ENCODE measurements at regions of chr18 and their contacts with region 1.

Region 1: DNA sequence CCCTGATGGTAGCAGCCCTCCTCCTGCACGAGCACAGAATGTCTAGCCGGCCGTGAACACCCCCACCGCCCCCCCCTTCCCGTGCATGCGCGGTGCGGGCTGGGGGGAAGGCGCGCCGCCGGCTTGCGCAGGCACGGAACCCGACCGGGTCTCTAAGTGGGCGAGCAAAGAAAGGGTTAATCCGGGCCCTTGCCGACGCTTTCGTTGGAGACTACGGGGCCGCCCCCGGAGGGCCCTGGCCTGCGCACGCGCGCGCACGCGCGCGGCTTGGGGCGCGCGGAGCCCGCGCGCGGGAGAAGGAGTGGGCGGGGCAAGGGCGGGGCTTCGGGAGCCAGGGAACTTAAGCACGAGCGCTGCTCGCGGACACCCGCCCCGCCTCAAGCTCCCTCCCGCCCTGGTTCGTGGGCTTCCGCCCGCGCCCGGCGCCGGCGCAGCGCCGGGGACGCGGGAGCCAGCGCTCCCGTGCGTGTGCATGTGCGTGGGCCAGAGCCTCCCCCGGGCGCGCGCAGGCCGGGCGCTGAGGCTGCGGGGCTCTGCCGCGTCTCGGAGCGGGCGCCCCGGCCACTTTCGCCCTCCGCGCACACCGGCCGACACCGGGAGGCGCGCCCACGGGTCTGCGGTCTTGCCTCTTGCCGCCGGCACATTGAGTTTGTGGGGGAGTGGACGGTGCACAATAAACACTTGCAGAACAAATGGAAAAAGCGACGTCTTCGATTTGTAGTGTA is 617 bp upstream of the ZBTB14 start:
- DNase-seq: peak; percentile 90 to 96 (median 95)
- ATAC-seq: peak; percentile 80
- H3K4me3 ChIP-seq: peak overlapping the region; percentile 76
- H3K4me3 Mint-ChIP-seq: peak overlapping the region; percentile 87 to 98 (median 94)
- H3K27ac ChIP-seq: peak overlapping the region; percentile 87
- H3K27ac Mint-ChIP-seq: peak overlapping the region; percentile 86 to 99 (median 97)
- H3K4me1 ChIP-seq: peaks cover 24 to 37% of the 10 kb centered on the region in 2 donors
- H3K4me1 Mint-ChIP-seq: peaks cover 4 to 48% (median 42%) of the 10 kb centered on the region in 7 donors
- H3K27me3 ChIP-seq: no peaks in the 10 kb centered on the region
- H3K27me3 Mint-ChIP-seq: peaks cover 0 to 18% (median 1%) of the 10 kb centered on the region in 5 donors

Region 2: GRCh38 chr18:3593904-3594661 is 1702.1 kb before region 1 on chr18:
- CTCF ChIA-PET with region 1: no interaction called
- POLR2A ChIA-PET with region 1: interaction called, 3 read pairs
- intact Hi-C with region 1: loop called in 1 of 2 experiments (anchors 2 kb)
- DNase-seq: peak; percentile 71 to 96 (median 93)
- ATAC-seq: peak; percentile 82
- H3K4me3 ChIP-seq: peak overlapping the region; percentile 73
- H3K4me3 Mint-ChIP-seq: peak overlapping the region; percentile 84 to 97 (median 93)
- H3K27ac ChIP-seq: peak overlapping the region; percentile 89
- H3K27ac Mint-ChIP-seq: peak overlapping the region; percentile 98 to 100 (median 99)
- H3K4me1 ChIP-seq: peaks cover 31 to 40% of the 10 kb centered on the region in 2 donors
- H3K4me1 Mint-ChIP-seq: peaks cover 32 to 66% (median 57%) of the 10 kb centered on the region in 7 donors
- H3K27me3 ChIP-seq: no peaks in the 10 kb centered on the region
- H3K27me3 Mint-ChIP-seq: no peaks in the 10 kb centered on the region

Region 3: DNA sequence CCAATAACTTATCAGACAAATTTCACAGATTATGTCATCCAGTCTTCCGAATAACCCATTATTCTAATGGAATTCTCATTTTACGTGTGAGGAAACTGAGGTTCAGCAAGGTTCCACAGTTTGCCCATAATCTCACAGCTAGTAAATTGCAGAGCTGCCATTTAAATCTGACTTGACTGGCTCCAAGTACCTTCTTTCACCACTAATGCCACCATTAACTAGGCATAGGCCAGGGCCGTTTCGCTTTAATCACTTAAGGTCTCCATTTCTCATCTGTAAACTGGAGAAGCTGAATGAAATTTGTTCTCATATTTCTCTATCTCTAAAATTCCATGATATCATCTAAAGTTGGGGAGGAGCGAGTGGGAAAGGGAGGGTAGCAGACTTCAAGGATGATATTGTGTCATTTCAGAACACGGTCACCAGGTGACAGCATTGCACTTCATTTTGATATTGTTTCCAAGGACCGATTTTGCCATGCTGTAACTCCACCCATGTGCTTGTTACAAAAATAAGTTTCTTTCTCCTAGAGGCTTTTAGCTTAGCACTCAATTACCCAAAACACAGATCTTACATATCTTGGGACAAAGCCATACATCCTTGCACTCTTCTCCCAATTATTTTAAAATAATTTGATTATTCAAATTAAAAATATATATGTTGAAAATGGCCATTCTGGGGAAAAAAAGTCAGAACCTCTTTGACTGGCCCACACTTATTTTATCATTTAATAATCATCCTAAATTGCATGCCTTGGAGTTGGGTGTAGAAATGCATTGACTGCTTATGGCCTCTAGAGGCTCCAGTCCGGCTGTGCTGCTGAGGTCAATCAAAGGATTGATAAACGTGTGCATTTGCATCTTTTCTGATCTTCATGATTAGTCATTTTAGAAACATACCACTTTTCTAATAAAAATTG is 222.9 kb before region 1 on chr18:
- CTCF ChIA-PET with region 1: no interaction called
- POLR2A ChIA-PET with region 1: interaction called, 5 read pairs
- intact Hi-C with region 1: loop called in 1 of 2 experiments (anchors 1 kb)
- DNase-seq: peak in 7 of 9 donors; percentile 15 to 55 (median 39)
- ATAC-seq: peak; percentile 75
- H3K4me3 ChIP-seq: no peak overlapping the region
- H3K4me3 Mint-ChIP-seq: no peak overlapping the region
- H3K27ac ChIP-seq: no peak overlapping the region
- H3K27ac Mint-ChIP-seq: no peak overlapping the region
- H3K4me1 ChIP-seq: no peaks in the 10 kb centered on the region
- H3K4me1 Mint-ChIP-seq: peaks cover 0 to 7% (median 3%) of the 10 kb centered on the region in 7 donors
- H3K27me3 ChIP-seq: no peaks in the 10 kb centered on the region
- H3K27me3 Mint-ChIP-seq: peaks cover 0 to 4% (median under 1%) of the 10 kb centered on the region in 5 donors

Region 4: DNA sequence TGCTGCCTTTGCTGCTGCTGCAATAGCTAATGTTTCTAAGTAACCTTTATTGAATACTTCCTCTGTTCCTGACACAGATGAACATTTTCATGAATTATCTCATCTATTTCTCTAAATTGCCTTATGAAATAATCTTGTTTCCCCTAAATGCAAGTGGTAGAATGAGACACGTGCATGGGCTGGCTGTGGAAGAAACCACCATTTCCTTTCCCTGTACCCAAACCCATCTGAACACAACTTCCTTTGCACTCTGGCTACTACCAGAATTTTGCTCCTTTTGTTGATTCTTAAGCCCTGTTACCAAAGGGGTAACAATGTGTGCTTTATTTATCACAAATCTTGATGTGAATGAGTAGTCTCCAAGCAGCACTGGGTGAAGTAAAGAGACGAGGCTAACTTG is 128.3 kb before region 1 on chr18:
- CTCF ChIA-PET with region 1: no interaction called
- POLR2A ChIA-PET with region 1: interaction called, 104 read pairs
- intact Hi-C with region 1: no loop called
- DNase-seq: peak in 6 of 9 donors; percentile 32 to 58 (median 43)
- ATAC-seq: peak; percentile 58
- H3K4me3 ChIP-seq: peak overlapping the region; percentile 6
- H3K4me3 Mint-ChIP-seq: peak overlapping the region; percentile 52 to 89 (median 69)
- H3K27ac ChIP-seq: peak overlapping the region; percentile 43
- H3K27ac Mint-ChIP-seq: peak overlapping the region in 8 of 9 donors; percentile 76 to 94 (median 87)
- H3K4me1 ChIP-seq: peaks cover 0 to 30% of the 10 kb centered on the region in 2 donors
- H3K4me1 Mint-ChIP-seq: peaks cover 10 to 54% (median 44%) of the 10 kb centered on the region in 7 donors
- H3K27me3 ChIP-seq: no peaks in the 10 kb centered on the region
- H3K27me3 Mint-ChIP-seq: no peaks in the 10 kb centered on the region

Region 5: GRCh38 chr18:5285326-5285725 is 10.8 kb before region 1 on chr18:
- CTCF ChIA-PET with region 1: no interaction called
- POLR2A ChIA-PET with region 1: interaction called, 36 read pairs
- intact Hi-C with region 1: no loop called
- DNase-seq: no peak
- ATAC-seq: no peak
- H3K4me3 ChIP-seq: no peak overlapping the region
- H3K4me3 Mint-ChIP-seq: no peak overlapping the region
- H3K27ac ChIP-seq: no peak overlapping the region
- H3K27ac Mint-ChIP-seq: no peak overlapping the region
- H3K4me1 ChIP-seq: peaks cover 0 to 5% of the 10 kb centered on the region in 2 donors
- H3K4me1 Mint-ChIP-seq: peaks cover 6 to 55% (median 46%) of the 10 kb centered on the region in 7 donors
- H3K27me3 ChIP-seq: no peaks in the 10 kb centered on the region
- H3K27me3 Mint-ChIP-seq: peaks cover 0 to 3% (median 0%) of the 10 kb centered on the region in 5 donors

Region 6: DNA sequence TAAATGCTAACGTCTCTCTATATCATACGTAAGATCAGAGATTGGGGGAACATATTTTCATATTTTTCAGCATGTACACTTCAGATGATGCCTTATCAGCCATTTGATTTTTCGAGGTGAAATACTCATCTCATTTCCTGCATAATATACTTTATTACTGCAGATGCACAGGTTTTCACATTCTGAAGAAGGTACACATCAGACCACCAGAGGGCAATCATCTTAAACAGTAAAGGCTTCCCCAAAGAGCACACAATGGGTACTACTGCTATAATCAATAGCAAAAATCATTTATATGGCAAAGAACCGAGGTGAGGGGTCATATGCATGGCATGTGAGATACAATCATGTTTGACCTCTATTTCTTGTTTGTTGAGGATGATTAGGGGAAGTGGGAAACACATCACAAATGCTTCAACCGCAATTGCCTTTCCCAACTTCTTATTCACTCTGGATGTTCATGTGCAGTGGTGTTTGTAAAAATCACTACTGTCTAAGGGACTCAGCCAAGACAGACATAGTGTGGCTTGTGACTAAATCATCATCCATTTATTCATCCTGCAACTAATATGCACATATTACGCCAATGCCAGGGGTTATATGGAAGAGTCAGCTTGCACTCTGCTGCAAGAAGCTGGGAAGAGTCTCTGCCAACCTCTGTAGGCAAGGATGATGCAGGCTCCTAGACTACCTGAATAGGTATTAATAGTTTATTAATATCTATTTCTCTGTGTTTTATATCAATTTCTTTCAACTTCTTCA is 128.9 kb after region 1 on chr18:
- CTCF ChIA-PET with region 1: no interaction called
- POLR2A ChIA-PET with region 1: no interaction called
- intact Hi-C with region 1: loop called in 1 of 2 experiments (anchors 10 kb)
- DNase-seq: peak in 6 of 9 donors; percentile 18 to 45 (median 34)
- ATAC-seq: peak; percentile 76
- H3K4me3 ChIP-seq: no peak overlapping the region
- H3K4me3 Mint-ChIP-seq: no peak overlapping the region
- H3K27ac ChIP-seq: no peak overlapping the region
- H3K27ac Mint-ChIP-seq: no peak overlapping the region
- H3K4me1 ChIP-seq: no peaks in the 10 kb centered on the region
- H3K4me1 Mint-ChIP-seq: peaks cover 0 to 11% (median 3%) of the 10 kb centered on the region in 7 donors
- H3K27me3 ChIP-seq: no peaks in the 10 kb centered on the region
- H3K27me3 Mint-ChIP-seq: peaks cover 0 to 12% (median 4%) of the 10 kb centered on the region in 5 donors

Region 7: DNA sequence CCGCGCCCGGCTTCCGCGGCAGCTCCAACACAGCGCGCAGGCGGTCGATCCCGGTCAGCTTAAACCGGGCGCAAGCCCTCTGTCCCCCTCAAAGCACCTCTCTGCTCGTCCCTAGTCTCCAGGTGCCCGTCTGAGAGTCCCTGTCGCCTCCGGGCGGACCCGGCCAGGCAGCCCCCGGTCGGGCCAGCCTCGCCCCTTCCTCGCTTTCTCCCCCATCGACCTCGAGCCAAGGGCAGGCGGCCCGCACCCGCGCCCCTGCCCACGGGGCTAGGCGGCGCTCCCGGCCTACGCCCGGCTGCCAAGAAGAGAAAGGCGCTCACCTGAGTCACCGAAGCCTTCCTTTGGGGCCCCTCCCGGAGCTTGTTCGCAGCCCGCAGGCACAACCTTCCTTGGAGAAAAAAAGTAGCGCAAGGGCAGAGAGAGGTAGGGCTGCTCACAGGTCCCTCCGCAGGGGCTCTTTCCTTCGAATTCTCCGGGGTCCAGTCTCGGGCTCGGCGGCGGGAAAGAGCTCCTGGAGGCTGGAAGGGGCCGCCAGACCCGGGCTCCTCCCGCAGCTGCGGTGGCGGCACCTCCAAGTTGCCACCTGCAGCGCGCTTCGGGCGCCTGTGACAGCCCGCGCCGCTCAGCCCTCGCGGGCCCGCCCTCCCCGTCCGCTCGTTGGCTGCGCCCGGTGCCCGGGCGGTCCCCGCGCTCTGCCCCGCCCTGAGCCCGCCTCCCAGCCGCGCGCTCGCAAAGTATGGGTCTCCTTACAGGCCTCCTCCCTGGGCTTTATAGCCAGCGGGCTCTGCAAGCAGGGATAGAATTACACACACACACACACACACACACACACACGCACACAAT is 334.1 kb after region 1 on chr18:
- CTCF ChIA-PET with region 1: no interaction called
- POLR2A ChIA-PET with region 1: no interaction called
- intact Hi-C with region 1: loop called in 1 of 2 experiments (anchors 5 kb)
- DNase-seq: peak in 7 of 9 donors; percentile 17 to 59 (median 30)
- ATAC-seq: peak; percentile 89
- H3K4me3 ChIP-seq: no peak overlapping the region
- H3K4me3 Mint-ChIP-seq: peak overlapping the region in 6 of 10 donors; percentile 65 to 93 (median 74)
- H3K27ac ChIP-seq: no peak overlapping the region
- H3K27ac Mint-ChIP-seq: no peak overlapping the region
- H3K4me1 ChIP-seq: peaks cover 0 to 5% of the 10 kb centered on the region in 2 donors
- H3K4me1 Mint-ChIP-seq: peaks cover 0 to 12% (median 7%) of the 10 kb centered on the region in 7 donors
- H3K27me3 ChIP-seq: peaks cover 0 to 3% of the 10 kb centered on the region in 2 donors
- H3K27me3 Mint-ChIP-seq: peaks cover 23 to 45% (median 36%) of the 10 kb centered on the region in 5 donors